ENCODE measurements at regions of chrX and their contacts with region 1.

Region 1: DNA sequence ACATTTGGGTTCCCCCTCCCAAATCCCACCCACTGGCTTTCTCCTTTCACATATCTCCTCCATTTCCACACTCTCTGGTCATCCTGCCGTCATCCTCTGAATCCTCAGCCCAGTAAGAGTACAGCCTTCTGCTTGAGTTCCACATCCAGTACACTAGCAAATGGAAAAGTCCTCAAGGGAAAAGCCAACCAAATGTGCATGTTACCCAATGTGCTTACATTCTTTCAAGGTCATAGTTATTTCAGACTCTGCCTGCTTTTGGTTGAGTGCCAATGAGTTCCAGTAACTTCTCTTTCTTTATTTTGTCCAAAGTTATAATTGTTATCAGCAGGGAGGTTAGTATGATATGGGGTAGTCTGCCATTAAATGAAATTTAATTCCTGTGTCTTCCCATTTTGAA is 78.1 kb downstream of the SRPX start:
- DNase-seq: no peak
- H3K4me3 ChIP-seq: no peak overlapping the region
- H3K27ac ChIP-seq: peak overlapping the region in 1 of 2 donors; percentile 19
- H3K4me1 ChIP-seq: no peaks in the 10 kb centered on the region
- H3K27me3 ChIP-seq: peaks cover 0 to 39% of the 10 kb centered on the region in 2 donors
- CTCF ChIP-seq: no peak
- POLR2A ChIP-seq: no peak

Region 2: DNA sequence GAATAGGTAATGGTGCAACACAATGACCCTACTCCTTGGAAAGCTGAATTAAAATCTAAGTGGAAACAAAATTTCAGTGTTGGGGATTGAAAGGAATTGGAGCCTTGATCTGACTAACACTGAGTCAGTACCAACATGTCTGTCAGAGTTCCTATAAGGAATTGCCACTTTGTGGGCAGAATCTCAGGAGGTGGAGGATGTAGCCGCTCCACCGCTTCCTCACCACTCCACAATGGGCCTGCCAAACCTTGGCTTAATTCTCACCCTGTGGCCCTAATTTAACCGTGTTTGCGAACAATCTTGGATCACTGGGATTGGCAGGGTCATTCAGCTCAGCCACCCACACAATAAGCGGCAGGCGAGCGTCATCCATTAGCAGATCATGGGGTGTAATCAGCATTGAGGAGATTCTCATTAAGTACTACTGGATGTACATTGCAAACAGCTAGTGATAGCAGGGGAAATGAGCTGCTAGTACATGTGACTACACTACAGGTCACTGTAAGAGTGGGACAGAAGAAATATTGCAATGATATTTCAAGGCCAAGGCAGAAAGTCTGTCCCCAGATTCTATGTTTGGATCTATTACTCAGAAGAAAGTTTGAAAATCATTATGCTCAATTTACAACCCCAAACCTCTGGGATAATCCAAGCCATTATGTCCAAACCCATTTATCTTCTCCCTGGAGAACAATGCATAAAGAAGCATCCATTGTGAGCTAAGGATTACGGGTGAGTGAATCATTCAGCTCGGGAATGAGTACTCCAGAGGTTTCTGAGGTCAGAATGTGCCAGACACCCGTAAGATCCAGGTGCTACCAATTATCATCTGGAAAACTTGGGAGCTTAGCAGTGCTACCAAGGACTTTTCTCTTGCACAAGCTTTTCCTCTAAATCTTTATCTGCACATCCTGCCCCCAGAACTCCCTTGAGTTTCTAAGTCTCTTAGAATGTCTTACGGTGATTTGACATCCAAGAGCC is 72.2 kb after region 1 on chrX:
- intact Hi-C with region 1: loop called (anchors 2 kb)
- DNase-seq: no peak
- H3K4me3 ChIP-seq: no peak overlapping the region
- H3K27ac ChIP-seq: peak overlapping the region in 1 of 2 donors; percentile 61
- H3K4me1 ChIP-seq: no peaks in the 10 kb centered on the region
- H3K27me3 ChIP-seq: peaks cover 0 to 72% of the 10 kb centered on the region in 2 donors
- CTCF ChIP-seq: no peak
- POLR2A ChIP-seq: no peak